ENCODE measurements at regions of chr14 and their contacts with region 1.

Region 1: DNA sequence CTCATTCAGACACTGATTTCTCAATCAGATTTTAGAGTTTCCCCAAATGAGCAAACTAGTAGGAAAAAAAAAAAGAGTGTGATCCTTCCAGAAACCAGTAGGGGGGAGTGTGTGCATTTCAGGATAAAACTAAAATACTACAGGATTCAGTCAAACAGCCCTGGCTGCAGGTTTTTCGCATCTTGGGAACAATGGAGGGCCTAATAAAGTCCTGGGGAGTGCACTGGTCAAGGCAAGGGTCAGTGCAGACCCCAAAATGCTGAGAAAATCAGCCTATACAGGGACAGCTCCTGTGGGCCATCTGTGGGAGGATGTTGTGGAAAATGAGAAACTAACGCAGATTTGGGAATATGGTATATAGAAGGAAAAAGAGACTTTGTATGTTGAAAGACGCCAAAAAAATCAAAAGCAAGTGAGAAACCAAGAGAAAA is 22.2 kb upstream of the ABCD4 start:
- DNase-seq: peak; percentile 73
- H3K4me3 ChIP-seq: no peak overlapping the region
- H3K27ac ChIP-seq: no peak overlapping the region
- H3K4me1 ChIP-seq: no peaks in the 10 kb centered on the region
- H3K27me3 ChIP-seq: no peaks in the 10 kb centered on the region
- CTCF ChIP-seq: peak; percentile 72
- EP300 ChIP-seq: no peak
- RAD21 ChIP-seq: peak; percentile 69

Region 2: GRCh38 chr14:74349757-74350156 is 24.8 kb after region 1 on chr14:
- CTCF ChIA-PET with region 1: interaction called, 13 read pairs
- POLR2A ChIA-PET with region 1: no interaction called
- DNase-seq: no peak
- H3K4me3 ChIP-seq: no peak overlapping the region
- H3K27ac ChIP-seq: no peak overlapping the region
- H3K4me1 ChIP-seq: no peaks in the 10 kb centered on the region
- H3K27me3 ChIP-seq: peaks cover 20% of the 10 kb centered on the region; the same call in 1 of the 2 replicates
- CTCF ChIP-seq: no peak
- EP300 ChIP-seq: no peak
- RAD21 ChIP-seq: no peak